CD8-positive, alpha-beta T cell (primary cell): ENCODE measurements at regions of chr17 and their contacts with region 1.

Region 1: DNA sequence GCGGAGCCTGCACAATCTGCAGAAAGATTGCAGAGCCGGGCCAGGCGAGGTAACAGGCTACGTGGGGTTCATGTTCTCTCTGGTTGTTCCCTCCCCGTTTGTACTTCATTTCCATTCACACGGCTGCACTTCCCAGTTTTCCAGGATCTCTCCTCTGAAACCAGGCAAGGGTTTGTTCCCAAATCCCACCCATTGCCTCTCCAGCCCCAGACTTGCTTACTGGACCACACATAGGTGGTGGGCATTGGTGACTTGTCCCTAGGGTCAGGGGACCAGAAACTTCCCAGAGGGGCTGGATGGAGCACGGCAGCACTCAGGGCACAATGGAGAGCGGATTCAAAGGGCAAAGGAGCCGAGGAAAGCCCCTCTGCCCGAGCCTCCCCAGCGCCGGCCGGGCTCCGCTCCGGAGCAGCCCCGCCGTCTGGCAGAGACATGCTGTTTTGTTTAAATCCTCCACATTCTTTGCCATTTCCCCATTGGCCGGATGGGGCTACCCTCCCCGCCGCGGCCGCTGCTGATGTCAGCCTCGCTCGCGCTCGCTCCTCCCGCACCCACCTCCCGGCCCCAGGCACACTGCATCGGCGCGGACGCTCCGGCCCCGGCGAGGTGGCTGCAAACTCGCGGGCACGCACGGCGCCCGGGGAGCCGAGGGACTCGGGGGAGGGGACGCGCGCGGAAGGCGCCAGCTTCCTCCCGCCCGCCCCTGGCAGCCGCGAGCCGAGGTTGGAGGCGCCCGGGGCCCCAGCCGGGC is at the start of gene PITPNC1:
- DNase-seq: peak; percentile 72 to 95 (median 88)
- ATAC-seq: peak; percentile 70
- H3K4me3 ChIP-seq: peak within 1 kb of the TSS; percentile 94 to 97
- H3K4me3 Mint-ChIP-seq: peak within 1 kb of the TSS; percentile 95
- H3K27ac ChIP-seq: peak within 1 kb of the TSS; percentile 81 to 87
- H3K27ac Mint-ChIP-seq: peak within 1 kb of the TSS; percentile 94
- H3K4me1 ChIP-seq: peaks cover 41% of the 10 kb centered on the region
- H3K4me1 Mint-ChIP-seq: peaks cover 46% of the 10 kb centered on the region
- H3K27me3 ChIP-seq: no peaks in the 10 kb centered on the region
- H3K27me3 Mint-ChIP-seq: no peaks in the 10 kb centered on the region
- CTCF ChIP-seq: no peak
- total RNA-seq, gene PITPNC1: 110 to 111 TPM

Region 2: GRCh38 chr17:67343251-67343650 is 33.7 kb before region 1 on chr17:
- CTCF ChIA-PET with region 1: no interaction called
- POLR2A ChIA-PET with region 1: no interaction called
- intact Hi-C with region 1: no loop called
- DNase-seq: no peak
- ATAC-seq: no peak
- H3K4me3 ChIP-seq: no peak overlapping the region
- H3K4me3 Mint-ChIP-seq: no peak overlapping the region
- H3K27ac ChIP-seq: no peak overlapping the region
- H3K27ac Mint-ChIP-seq: no peak overlapping the region
- H3K4me1 ChIP-seq: no peaks in the 10 kb centered on the region
- H3K4me1 Mint-ChIP-seq: no peaks in the 10 kb centered on the region
- H3K27me3 ChIP-seq: no peaks in the 10 kb centered on the region
- H3K27me3 Mint-ChIP-seq: no peaks in the 10 kb centered on the region
- CTCF ChIP-seq: no peak

Region 3: DNA sequence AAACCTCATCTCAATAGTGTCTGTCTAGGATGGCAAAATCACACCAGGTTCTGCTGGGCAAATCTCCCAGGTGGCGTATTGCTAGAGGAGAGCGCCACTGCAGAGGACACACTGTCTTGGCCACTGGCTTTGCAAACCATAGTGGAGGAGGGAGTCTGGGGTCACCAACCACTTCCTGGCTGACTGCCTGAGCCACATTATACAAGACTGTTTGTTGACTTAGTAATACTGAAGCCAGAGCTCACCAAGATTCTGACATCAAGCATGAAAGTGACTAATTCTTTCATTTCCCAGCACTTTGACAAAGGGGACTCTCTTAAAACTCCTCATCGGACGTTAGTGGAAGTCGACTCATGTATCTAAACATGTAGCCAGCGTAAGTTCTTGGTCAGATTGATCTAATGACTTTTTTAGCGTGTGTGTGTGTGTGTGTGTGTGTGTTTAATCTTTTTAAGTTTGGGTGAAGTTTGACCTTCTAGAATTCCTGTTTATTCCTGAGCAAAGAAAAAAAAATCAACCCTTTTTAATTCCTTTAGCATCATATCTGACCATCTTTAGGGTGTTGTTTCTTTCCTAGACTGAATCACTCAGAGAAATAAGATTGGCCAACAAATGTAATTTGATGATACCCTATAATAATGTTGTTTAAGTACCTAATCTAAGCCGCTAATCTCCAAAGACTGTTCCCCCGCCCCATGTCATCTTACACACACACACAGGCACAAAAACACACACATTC is 13.9 kb after region 1 on chr17:
- CTCF ChIA-PET with region 1: interaction called, 81 read pairs
- POLR2A ChIA-PET with region 1: interaction called, 4 read pairs
- intact Hi-C with region 1: loop called in 1 of 2 experiments (anchors 1 kb)
- DNase-seq: peak; percentile 21 to 84 (median 67)
- ATAC-seq: peak; percentile 74
- H3K4me3 ChIP-seq: peak overlapping the region; percentile 7 to 30
- H3K4me3 Mint-ChIP-seq: peak overlapping the region; percentile 59
- H3K27ac ChIP-seq: peak overlapping the region; percentile 62 to 74
- H3K27ac Mint-ChIP-seq: peak overlapping the region; percentile 91
- H3K4me1 ChIP-seq: peaks cover 67% of the 10 kb centered on the region
- H3K4me1 Mint-ChIP-seq: peaks cover 86% of the 10 kb centered on the region
- H3K27me3 ChIP-seq: no peaks in the 10 kb centered on the region
- H3K27me3 Mint-ChIP-seq: no peaks in the 10 kb centered on the region
- CTCF ChIP-seq: no peak

Region 4: GRCh38 chr17:67441052-67441927 is 64.4 kb after region 1 on chr17:
- CTCF ChIA-PET with region 1: interaction called, 55 read pairs
- POLR2A ChIA-PET with region 1: interaction called, 60 read pairs
- intact Hi-C with region 1: loop called (anchors 1 to 2 kb)
- DNase-seq: peak; percentile 61 to 95 (median 79)
- ATAC-seq: peak; percentile 82
- H3K4me3 ChIP-seq: peak overlapping the region; percentile 38 to 47
- H3K4me3 Mint-ChIP-seq: peak overlapping the region; percentile 71
- H3K27ac ChIP-seq: peak overlapping the region; percentile 84 to 98
- H3K27ac Mint-ChIP-seq: peak overlapping the region; percentile 95
- H3K4me1 ChIP-seq: peaks cover 86% of the 10 kb centered on the region
- H3K4me1 Mint-ChIP-seq: peaks cover 83% of the 10 kb centered on the region
- H3K27me3 ChIP-seq: no peaks in the 10 kb centered on the region
- H3K27me3 Mint-ChIP-seq: no peaks in the 10 kb centered on the region
- CTCF ChIP-seq: no peak

Region 5: GRCh38 chr17:67475236-67475937 is 98.5 kb after region 1 on chr17:
- CTCF ChIA-PET with region 1: interaction called, 502 read pairs
- POLR2A ChIA-PET with region 1: interaction called, 159 read pairs
- intact Hi-C with region 1: loop called (anchors 1 kb)
- DNase-seq: peak; percentile 76 to 94 (median 87)
- ATAC-seq: peak; percentile 77
- H3K4me3 ChIP-seq: peak overlapping the region; percentile 18 to 27
- H3K4me3 Mint-ChIP-seq: peak overlapping the region; percentile 73
- H3K27ac ChIP-seq: peak overlapping the region; percentile 47 to 81
- H3K27ac Mint-ChIP-seq: peak overlapping the region; percentile 95
- H3K4me1 ChIP-seq: peaks cover 72% of the 10 kb centered on the region
- H3K4me1 Mint-ChIP-seq: peaks cover 72% of the 10 kb centered on the region
- H3K27me3 ChIP-seq: no peaks in the 10 kb centered on the region
- H3K27me3 Mint-ChIP-seq: no peaks in the 10 kb centered on the region
- CTCF ChIP-seq: peak; percentile 95

Region 6: DNA sequence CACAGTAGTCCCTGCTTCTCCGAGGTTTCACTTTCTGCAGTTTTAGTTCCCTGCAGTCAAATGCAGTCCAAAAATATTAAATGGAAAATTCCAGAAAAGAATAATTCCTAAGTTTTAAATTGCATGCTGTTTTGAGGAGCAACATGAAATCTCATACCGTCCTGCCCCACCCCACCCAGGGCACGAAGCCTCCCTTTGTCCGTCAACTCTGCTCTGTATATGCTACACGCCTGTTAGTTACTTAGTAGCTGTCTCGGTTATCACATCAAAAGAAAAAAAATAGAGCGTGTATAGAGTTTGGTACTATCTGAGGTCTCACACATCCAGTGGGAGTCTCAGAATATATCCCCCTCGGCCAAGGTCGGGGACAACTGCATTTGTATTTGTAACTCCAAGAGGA is 211.4 kb after region 1 on chr17:
- CTCF ChIA-PET with region 1: interaction called, 19 read pairs
- POLR2A ChIA-PET with region 1: interaction called, 6 read pairs
- intact Hi-C with region 1: no loop called
- DNase-seq: no peak
- ATAC-seq: no peak
- H3K4me3 ChIP-seq: no peak overlapping the region
- H3K4me3 Mint-ChIP-seq: no peak overlapping the region
- H3K27ac ChIP-seq: no peak overlapping the region
- H3K27ac Mint-ChIP-seq: no peak overlapping the region
- H3K4me1 ChIP-seq: no peaks in the 10 kb centered on the region
- H3K4me1 Mint-ChIP-seq: peaks cover 39% of the 10 kb centered on the region
- H3K27me3 ChIP-seq: no peaks in the 10 kb centered on the region
- H3K27me3 Mint-ChIP-seq: no peaks in the 10 kb centered on the region
- CTCF ChIP-seq: no peak

Region 7: GRCh38 chr17:67689534-67690177 is 312.7 kb after region 1 on chr17:
- CTCF ChIA-PET with region 1: interaction called, 88 read pairs
- POLR2A ChIA-PET with region 1: interaction called, 4 read pairs
- intact Hi-C with region 1: loop called (anchors 1 kb)
- DNase-seq: peak in 7 of 9 experiments; percentile 18 to 77 (median 39)
- ATAC-seq: peak; percentile 73
- H3K4me3 ChIP-seq: no peak overlapping the region
- H3K4me3 Mint-ChIP-seq: no peak overlapping the region
- H3K27ac ChIP-seq: no peak overlapping the region
- H3K27ac Mint-ChIP-seq: no peak overlapping the region
- H3K4me1 ChIP-seq: no peaks in the 10 kb centered on the region
- H3K4me1 Mint-ChIP-seq: peaks cover 4% of the 10 kb centered on the region
- H3K27me3 ChIP-seq: no peaks in the 10 kb centered on the region
- H3K27me3 Mint-ChIP-seq: no peaks in the 10 kb centered on the region
- CTCF ChIP-seq: peak; percentile 93